ENCODE measurements at regions of chr11 and their contacts with region 1.

Region 1: DNA sequence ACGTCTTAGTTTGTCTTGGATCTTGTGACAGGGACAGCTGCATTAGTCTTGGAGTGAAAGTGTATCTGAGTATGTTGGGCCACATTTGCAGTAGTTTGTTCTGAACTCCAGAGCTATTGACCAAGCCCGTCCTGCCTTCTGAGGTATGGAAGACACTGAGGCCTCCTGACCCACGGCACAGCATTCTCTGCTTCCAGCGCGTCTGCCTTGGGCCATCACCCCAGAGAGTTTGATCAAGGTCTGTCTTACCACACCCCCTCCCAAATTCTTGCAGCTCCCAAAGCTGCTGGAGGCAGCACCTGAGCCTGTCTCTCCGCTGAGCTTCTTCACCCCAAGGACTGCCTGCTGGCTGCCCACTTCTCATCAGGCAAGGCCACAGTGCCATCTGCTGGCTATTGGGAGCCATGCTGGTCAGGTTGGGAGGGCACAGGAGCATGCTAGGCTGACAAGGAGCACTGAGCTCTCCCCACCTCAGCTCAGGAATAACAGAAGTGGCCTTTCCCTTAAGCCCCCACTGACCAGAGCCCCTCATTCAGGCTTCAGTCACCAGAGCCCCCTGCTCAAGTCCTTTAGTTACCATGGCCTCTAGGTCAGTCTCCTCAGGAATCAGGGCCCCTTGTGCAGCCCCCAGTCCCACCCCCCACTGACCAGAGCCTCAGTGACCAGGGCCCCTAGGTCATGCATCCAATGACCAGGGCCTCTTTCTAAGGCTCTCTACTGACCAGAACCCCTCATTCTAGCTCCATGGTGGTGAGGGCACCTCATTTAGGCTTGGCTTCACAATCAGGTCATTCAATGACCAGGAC is 27.2 kb upstream of the SMPD1 start:
- DNase-seq: peak; percentile 52 to 78 (median 62)
- ATAC-seq: peak; percentile 98
- H3K4me3 ChIP-seq: no peak overlapping the region
- H3K27ac ChIP-seq: no peak overlapping the region
- H3K4me1 ChIP-seq: no peaks in the 10 kb centered on the region
- H3K27me3 ChIP-seq: peaks cover 8 to 9% of the 10 kb centered on the region in 2 experiments; a peak in 2 of 5 replicates
- CTCF ChIP-seq: peak; percentile 85 to 87 (median 86)
- EP300 ChIP-seq: no peak
- POLR2A ChIP-seq: no peak
- RAD21 ChIP-seq: peak; percentile 61 to 74

Region 2: GRCh38 chr11:6298605-6299004 is 64.5 kb before region 1 on chr11:
- CTCF ChIA-PET with region 1: no interaction called
- POLR2A ChIA-PET with region 1: no interaction called
- in situ Hi-C with region 1: no loop called
- intact Hi-C with region 1: loop called (anchors 5 kb)
- DNase-seq: peak in 1 of 4 experiments; percentile 12
- ATAC-seq: peak; percentile 82
- H3K4me3 ChIP-seq: no peak overlapping the region
- H3K27ac ChIP-seq: no peak overlapping the region
- H3K4me1 ChIP-seq: no peaks in the 10 kb centered on the region
- H3K27me3 ChIP-seq: peaks cover 20 to 27% of the 10 kb centered on the region in 2 experiments
- CTCF ChIP-seq: peak; percentile 49 to 98 (median 85)
- EP300 ChIP-seq: no peak
- POLR2A ChIP-seq: no peak
- RAD21 ChIP-seq: peak in 1 of 2 experiments; percentile 28; a peak in 1 of 4 replicates

Region 3: DNA sequence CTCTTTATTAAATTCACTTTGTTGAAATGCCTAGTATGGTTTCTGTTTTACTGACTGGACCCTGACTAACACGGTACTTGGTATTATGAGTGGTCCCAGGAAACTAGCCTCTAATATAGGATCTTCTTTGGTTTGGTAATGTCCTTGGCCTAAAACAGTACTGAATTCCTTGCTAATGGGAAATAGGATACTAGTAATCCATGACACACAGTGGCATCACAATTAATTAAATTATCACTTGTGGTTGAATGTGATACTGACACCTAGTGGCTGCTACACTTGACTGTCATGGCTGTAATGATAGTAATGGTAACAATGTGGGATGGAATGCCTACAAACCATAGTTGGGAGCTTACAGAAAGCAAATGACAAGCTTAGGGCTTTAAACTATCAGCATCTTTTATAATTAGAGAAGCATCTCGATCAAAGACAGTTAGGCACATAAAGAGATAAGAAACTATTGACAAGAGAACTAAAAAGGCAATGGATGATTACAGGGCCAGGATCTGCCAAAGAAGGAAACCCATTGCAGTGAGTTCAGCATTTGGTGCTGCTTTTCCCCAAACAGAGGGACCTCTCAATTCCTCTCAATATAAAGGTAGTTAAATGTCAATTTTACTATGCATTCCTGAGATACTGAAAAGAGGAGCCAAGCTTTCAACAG is 142.6 kb after region 1 on chr11:
- CTCF ChIA-PET with region 1: no interaction called
- POLR2A ChIA-PET with region 1: no interaction called
- in situ Hi-C with region 1: no loop called
- intact Hi-C with region 1: no loop called
- DNase-seq: peak; percentile 32 to 53 (median 34)
- ATAC-seq: peak; percentile 86
- H3K4me3 ChIP-seq: no peak overlapping the region
- H3K27ac ChIP-seq: no peak overlapping the region
- H3K4me1 ChIP-seq: no peaks in the 10 kb centered on the region
- H3K27me3 ChIP-seq: no peaks in the 10 kb centered on the region
- CTCF ChIP-seq: peak; percentile 61 to 78 (median 77); a peak in 5 of 6 replicates
- EP300 ChIP-seq: no peak
- POLR2A ChIP-seq: no peak
- RAD21 ChIP-seq: peak; percentile 46 to 69